ENCODE measurements at regions of chr9 and their contacts with region 1.

Region 1: DNA sequence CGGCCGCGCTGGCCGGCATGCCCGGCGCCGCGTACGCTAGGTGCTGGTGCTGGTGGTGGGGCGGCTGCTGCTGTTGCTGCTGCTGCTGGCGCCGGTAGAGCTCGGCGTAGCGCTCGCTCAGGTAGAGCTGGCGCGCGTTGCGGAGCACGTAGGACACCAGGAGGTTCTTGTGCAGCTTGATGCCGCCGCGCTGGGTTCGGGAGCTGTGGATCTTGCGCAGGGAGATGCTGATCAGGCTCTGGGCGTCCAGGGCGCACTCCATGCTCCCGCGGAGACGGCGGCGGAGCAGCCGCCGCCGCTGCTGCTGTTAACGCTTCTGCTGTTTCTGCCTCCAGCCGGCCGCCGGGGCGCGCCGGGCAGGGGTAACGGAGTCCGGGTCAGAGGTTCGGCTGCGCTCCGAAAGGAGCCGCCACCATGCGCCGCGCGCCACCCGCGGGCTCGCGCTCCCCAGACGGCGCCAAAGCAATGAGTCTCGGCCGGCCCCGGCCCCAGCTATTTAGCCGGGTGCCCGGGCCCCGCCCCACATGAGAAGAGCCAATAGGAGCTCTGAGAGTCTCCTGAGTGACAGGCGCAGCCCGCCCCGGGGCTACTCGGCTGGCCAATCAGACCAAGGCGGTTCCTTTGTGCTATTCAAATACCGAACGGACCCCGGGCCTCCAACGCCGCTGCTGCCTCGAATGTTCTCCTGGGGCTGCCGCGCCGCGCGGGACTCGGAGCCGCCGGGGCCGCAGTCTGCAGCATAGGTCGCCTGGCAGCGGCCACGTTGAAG is at the start of gene IER5L:
- DNase-seq: peak; percentile 95 to 99
- ATAC-seq: peak; percentile 49 to 76
- H3K4me3 ChIP-seq: peak within 1 kb of the TSS; percentile 87
- H3K27ac ChIP-seq: peak within 1 kb of the TSS; percentile 99
- H3K4me1 ChIP-seq: peaks cover 55% of the 10 kb centered on the region
- CTCF ChIP-seq: no peak; the same call in 2 of the 3 replicates
- EP300 ChIP-seq: no peak
- POLR2A ChIP-seq: peak; percentile 99
- RAD21 ChIP-seq: peak in 1 of 2 experiments; percentile 43; a peak in 2 of 5 replicates
- polyA plus RNA-seq, gene IER5L: 16.8 and 25.1 TPM in 2 replicates

Region 2: DNA sequence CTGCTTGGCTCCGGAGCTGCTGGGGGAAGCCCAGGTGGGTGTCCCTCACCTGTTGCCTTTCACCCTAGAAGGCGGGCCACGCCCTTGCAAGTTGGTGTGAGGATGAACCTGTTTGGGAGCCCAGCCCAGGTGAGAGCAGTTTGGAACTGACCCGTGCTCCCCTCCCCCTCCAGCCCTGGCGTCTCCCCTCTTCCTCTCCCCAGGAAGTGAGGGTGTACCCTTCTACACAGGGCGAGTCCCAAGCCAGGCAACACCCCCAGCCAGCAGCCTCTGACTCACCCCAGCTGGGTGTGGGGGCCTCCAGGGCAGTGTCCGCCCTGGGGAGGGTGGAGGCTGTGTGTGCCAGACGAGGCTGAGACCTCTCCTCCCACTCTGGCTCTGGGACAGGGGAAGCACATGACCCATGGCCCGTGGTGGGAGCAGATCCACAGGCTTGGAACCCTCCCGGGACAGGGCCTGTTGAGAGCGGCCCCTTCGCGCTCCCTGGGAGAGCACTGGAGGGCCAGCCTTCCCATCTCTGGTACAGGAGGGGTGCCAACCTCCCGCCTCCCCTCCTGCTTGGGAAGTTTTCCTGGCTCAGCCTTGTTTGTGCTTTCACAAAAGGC is 285.6 kb before region 1 on chr9:
- CTCF ChIA-PET with region 1: no interaction called
- POLR2A ChIA-PET with region 1: no interaction called
- DNase-seq: peak; percentile 55 to 70
- ATAC-seq: peak; percentile 90 to 91
- H3K4me3 ChIP-seq: 0 out of 3 replicates have a peak overlapping the region, but pooled peaks have one; percentile 21
- H3K27ac ChIP-seq: peak overlapping the region; percentile 89 to 95
- H3K4me1 ChIP-seq: peaks cover 34% of the 10 kb centered on the region
- CTCF ChIP-seq: no peak
- EP300 ChIP-seq: no peak; a peak in 1 of 5 replicates
- POLR2A ChIP-seq: no peak
- RAD21 ChIP-seq: no peak

Region 3: DNA sequence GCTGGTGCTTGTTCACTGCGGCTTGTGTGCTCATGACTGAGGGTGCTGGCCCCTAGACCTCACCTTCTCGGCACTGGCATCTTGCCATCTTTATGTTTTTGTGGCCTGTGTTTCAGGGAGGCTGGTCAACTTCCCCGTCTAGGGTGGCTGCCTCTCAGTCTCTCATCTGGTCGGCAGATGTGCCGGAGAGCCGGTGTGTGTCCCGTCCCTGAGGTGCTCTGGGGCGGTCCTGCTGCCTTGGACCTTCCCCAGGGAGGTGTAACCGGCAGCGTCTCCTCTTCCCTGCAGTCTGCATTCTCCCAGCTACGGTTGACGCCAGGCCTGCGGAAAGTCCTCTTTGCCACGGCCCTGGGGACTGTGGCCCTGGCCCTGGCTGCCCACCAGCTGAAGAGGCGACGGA is 136.0 kb before region 1 on chr9:
- CTCF ChIA-PET with region 1: no interaction called
- POLR2A ChIA-PET with region 1: no interaction called
- DNase-seq: no peak
- ATAC-seq: no peak
- H3K4me3 ChIP-seq: no peak overlapping the region
- H3K27ac ChIP-seq: no peak overlapping the region
- H3K4me1 ChIP-seq: peaks cover 9% of the 10 kb centered on the region; the same call in 1 of the 3 replicates
- CTCF ChIP-seq: no peak
- EP300 ChIP-seq: no peak
- POLR2A ChIP-seq: no peak
- RAD21 ChIP-seq: no peak

Region 4: DNA sequence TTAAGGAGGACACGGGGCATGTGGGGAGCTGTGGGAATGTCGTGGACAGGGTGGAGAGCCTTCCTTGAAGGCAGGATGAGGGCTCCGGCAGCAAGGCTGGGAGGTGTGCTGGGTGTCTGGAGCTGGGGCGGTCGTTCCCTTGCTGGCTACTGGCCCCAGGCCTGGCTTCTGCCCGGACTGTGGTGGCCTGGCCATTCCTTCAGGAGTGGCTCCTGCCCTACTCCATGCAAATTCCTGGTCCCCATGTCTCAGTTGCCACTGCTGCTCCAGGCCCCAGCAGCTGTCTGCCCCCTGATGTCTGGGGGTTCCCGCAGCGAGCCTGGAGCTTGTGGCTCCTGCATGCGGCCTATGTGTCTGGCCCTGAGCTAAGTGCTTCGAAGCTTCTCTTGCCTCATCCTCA is 21.8 kb before region 1 on chr9:
- CTCF ChIA-PET with region 1: interaction called, 1,029 read pairs
- POLR2A ChIA-PET with region 1: interaction called, 3 read pairs
- DNase-seq: no peak
- ATAC-seq: no peak
- H3K4me3 ChIP-seq: no peak overlapping the region
- H3K27ac ChIP-seq: 0 out of 6 replicates have a peak overlapping the region, but pooled peaks of 1 of the 2 experiments have one; percentile 6
- H3K4me1 ChIP-seq: no peaks in the 10 kb centered on the region
- CTCF ChIP-seq: no peak
- EP300 ChIP-seq: no peak
- POLR2A ChIP-seq: no peak
- RAD21 ChIP-seq: no peak

Region 5: DNA sequence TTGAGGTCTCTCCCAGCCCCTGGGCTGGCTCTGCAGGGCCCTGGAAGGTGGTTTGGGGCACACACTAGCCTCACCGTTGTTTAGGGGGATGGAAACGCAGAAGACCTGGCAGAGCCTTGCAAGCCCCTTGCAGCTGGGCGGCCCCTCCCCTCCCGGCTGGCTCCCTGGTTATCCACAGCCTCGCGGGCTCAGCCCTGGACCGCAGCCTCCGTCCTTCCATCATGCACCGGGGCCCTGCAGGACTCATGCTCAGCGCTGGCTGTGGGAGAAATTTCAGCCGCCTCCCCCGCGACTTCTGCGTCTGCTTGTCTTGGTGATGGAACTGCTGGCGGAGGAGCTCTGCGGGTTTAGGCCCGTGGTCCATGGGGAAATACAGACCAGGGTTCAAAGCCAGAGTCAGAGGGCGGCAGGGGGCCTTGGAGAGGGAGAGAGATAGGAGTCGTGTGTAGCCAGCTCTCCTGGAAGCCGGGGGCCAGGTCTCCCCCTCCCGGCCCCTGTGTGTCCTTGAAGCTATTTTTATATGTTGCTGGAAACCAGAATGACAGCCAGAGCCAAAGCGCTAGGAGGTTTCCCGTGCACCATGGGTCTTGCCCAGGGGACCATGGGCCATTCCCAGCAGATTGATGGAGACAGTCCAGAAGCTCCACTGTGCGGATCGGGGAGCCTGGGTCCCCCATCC is 76.0 kb after region 1 on chr9:
- CTCF ChIA-PET with region 1: interaction called, 5 read pairs
- POLR2A ChIA-PET with region 1: interaction called, 10 read pairs
- DNase-seq: no peak
- ATAC-seq: no peak
- H3K4me3 ChIP-seq: no peak overlapping the region
- H3K27ac ChIP-seq: peak overlapping the region in 1 of 2 experiments; percentile 54; a peak in 2 of 6 replicates
- H3K4me1 ChIP-seq: peaks cover 14% of the 10 kb centered on the region
- CTCF ChIP-seq: no peak
- EP300 ChIP-seq: no peak
- POLR2A ChIP-seq: no peak
- RAD21 ChIP-seq: no peak

Region 6: GRCh38 chr9:129436751-129437625 is 259.0 kb after region 1 on chr9:
- CTCF ChIA-PET with region 1: interaction called, 11 read pairs
- POLR2A ChIA-PET with region 1: interaction called, 5 read pairs
- DNase-seq: no peak
- ATAC-seq: peak; percentile 55 to 71; a peak in 4 of 6 replicates
- H3K4me3 ChIP-seq: peak overlapping the region; percentile 47
- H3K27ac ChIP-seq: peak overlapping the region; percentile 80 to 93
- H3K4me1 ChIP-seq: peaks cover 8% of the 10 kb centered on the region
- CTCF ChIP-seq: no peak
- EP300 ChIP-seq: no peak
- POLR2A ChIP-seq: no peak
- RAD21 ChIP-seq: peak in 1 of 2 experiments; percentile 15; a peak in 1 of 5 replicates

Region 7: DNA sequence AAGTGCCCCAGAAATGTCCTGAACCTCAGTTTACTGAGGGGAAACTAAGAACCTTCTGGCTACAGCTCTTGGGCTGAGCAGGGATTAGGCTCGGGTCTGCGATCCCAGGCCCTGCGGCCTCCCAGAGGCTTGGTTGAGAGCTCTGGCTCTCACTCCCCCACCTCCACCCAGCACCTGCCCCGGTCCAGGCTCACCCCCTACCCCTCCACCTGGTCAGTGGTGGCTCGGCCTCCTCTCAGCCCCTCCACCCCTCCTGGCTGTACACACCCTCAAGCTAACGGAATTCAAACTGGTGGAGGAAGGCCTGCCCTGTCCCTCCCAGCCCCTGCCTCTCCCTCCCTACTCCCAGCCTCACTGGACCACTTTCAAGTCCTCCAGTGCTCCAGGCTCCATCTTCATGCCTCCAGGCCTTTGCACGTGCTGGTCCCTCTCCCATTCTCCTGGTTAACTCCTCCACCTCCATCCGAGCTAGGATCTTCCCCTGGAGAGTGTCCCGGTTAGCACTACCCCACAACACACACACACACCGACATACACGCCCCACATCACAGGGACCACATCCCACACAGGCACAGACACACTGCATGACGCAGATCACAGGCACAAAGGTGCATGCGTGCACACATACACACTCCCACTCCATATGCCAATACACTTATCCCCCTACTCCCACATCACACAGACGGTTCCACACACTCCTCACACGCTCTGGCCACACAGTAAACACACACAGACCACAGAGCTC is 312.0 kb after region 1 on chr9:
- CTCF ChIA-PET with region 1: interaction called, 90 read pairs
- POLR2A ChIA-PET with region 1: interaction called, 171 read pairs
- DNase-seq: peak in 1 of 2 experiments; percentile 68
- ATAC-seq: peak; percentile 0; a peak in 3 of 6 replicates
- H3K4me3 ChIP-seq: peak overlapping the region; percentile 41
- H3K27ac ChIP-seq: peak overlapping the region; percentile 99 to 100
- H3K4me1 ChIP-seq: peaks cover 95% of the 10 kb centered on the region
- CTCF ChIP-seq: no peak
- EP300 ChIP-seq: no peak
- POLR2A ChIP-seq: peak; percentile 53
- RAD21 ChIP-seq: no peak

Region 8: GRCh38 chr9:129610473-129611301 is 432.7 kb after region 1 on chr9:
- CTCF ChIA-PET with region 1: interaction called, 82 read pairs
- POLR2A ChIA-PET with region 1: interaction called, 18 read pairs
- DNase-seq: peak; percentile 74 to 88
- ATAC-seq: peak; percentile 57 to 62
- H3K4me3 ChIP-seq: peak overlapping the region; percentile 55
- H3K27ac ChIP-seq: peak overlapping the region; percentile 100
- H3K4me1 ChIP-seq: peaks cover 62% of the 10 kb centered on the region
- CTCF ChIP-seq: peak; percentile 91
- EP300 ChIP-seq: no peak
- POLR2A ChIP-seq: peak; percentile 19
- RAD21 ChIP-seq: peak; percentile 87 to 99